Activated B cell treated with CpG ODN at 0.5 μM for 24 hours (primary cell): ENCODE measurements at regions of chr6 and their contacts with region 1.

Region 1: DNA sequence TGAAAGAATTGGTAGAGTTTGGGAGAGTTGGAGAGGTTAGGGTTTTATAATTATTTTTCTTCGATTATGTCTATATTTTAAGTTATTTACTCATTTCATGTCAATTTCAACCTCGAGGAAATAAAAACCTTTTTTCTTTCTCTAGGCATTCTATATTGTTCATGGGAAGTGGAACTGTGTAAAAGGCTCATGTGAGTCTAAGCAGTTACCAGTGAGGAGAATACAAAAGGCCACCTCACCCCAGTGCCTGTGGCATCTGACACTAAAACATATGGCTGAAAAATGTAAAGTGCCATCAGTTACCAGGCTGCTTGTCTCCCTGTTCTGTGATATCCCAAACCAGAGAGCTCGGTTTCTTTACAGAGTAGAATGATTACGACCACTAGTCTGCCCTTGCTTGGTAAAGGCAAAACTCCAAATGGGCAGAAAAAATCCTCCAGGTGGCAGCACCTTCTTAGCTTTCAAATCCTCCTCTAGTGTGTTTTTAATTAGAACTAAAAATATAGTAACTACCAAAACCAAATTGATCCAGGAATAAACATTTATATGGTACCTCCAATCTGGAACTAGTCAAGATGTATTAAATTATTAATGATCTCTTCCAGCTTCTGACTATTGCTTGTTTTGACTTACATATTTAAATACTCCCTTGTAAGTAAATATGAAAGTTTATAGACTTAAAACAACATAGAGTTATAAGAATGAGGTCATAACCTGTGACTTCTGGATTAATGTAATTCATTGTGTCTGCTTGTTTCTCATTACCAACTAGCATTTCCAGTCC is 122.6 kb upstream of the MCHR2 start:
- DNase-seq: no peak
- ATAC-seq: no peak
- H3K4me3 Mint-ChIP-seq: no peak overlapping the region
- H3K27ac Mint-ChIP-seq: no peak overlapping the region
- H3K4me1 Mint-ChIP-seq: no peaks in the 10 kb centered on the region
- H3K27me3 Mint-ChIP-seq: peaks cover 2% of the 10 kb centered on the region
- CTCF ChIP-seq: no peak

Region 2: GRCh38 chr6:100202417-100203194 is 86.0 kb after region 1 on chr6:
- CTCF ChIA-PET with region 1: no interaction called
- POLR2A ChIA-PET with region 1: no interaction called
- intact Hi-C with region 1: no loop called
- DNase-seq: no peak
- ATAC-seq: no peak
- H3K4me3 Mint-ChIP-seq: no peak overlapping the region
- H3K27ac Mint-ChIP-seq: no peak overlapping the region
- H3K4me1 Mint-ChIP-seq: no peaks in the 10 kb centered on the region
- H3K27me3 Mint-ChIP-seq: no peaks in the 10 kb centered on the region
- CTCF ChIP-seq: no peak

Region 3: DNA sequence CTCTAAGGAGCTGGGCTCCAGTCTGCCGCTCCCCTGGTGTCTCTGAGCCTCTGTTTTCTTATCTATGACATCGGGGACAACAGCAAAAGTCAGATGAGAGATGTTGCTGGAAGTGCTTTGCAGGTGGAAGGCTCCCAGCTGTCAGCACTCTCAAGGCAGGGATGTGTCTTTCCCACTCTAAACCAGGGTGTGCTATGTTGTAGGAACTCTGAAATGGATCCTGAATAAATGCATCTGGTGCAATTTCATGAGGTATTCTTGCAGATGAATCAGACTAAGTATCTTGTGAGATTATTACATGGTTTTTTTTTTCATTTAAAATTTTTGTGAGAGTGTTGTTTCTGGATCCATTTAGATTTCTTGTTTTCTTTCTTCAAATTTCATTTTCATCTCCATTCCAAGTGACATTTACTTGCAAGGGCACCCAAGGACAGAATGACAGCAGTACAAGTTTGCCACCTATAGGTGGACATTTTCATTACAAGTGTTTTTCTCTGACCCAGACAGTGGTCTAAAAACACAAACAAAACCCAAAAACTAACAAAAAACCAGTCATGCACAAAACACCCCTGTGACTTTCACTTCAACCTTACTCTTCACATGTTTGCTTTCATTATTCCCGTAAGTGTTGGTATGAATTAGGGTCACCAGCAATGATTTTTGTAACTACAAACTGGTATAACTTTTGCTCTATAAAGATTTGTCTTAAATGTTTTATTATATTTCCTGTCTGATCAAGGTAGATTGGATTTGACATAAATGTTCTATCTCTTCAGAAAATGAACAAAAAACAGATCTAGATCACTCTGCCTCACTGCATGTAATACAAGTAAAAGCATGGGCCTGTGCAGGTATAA is 362.8 kb after region 1 on chr6:
- CTCF ChIA-PET with region 1: no interaction called
- POLR2A ChIA-PET with region 1: no interaction called
- intact Hi-C with region 1: loop called (anchors 1 kb)
- DNase-seq: no peak
- ATAC-seq: no peak
- H3K4me3 Mint-ChIP-seq: no peak overlapping the region
- H3K27ac Mint-ChIP-seq: no peak overlapping the region
- H3K4me1 Mint-ChIP-seq: no peaks in the 10 kb centered on the region
- H3K27me3 Mint-ChIP-seq: peaks cover 8% of the 10 kb centered on the region
- CTCF ChIP-seq: no peak

Region 4: GRCh38 chr6:100573167-100573566 is 456.6 kb after region 1 on chr6:
- CTCF ChIA-PET with region 1: no interaction called
- POLR2A ChIA-PET with region 1: no interaction called
- intact Hi-C with region 1: loop called (anchors 2 kb)
- DNase-seq: no peak
- ATAC-seq: no peak
- H3K4me3 Mint-ChIP-seq: no peak overlapping the region
- H3K27ac Mint-ChIP-seq: no peak overlapping the region
- H3K4me1 Mint-ChIP-seq: no peaks in the 10 kb centered on the region
- H3K27me3 Mint-ChIP-seq: no peaks in the 10 kb centered on the region
- CTCF ChIP-seq: no peak

Region 5: GRCh38 chr6:100657678-100658330 is 541.2 kb after region 1 on chr6:
- CTCF ChIA-PET with region 1: no interaction called
- POLR2A ChIA-PET with region 1: no interaction called
- intact Hi-C with region 1: loop called (anchors 1 kb)
- DNase-seq: no peak
- ATAC-seq: no peak
- H3K4me3 Mint-ChIP-seq: no peak overlapping the region
- H3K27ac Mint-ChIP-seq: no peak overlapping the region
- H3K4me1 Mint-ChIP-seq: no peaks in the 10 kb centered on the region
- H3K27me3 Mint-ChIP-seq: no peaks in the 10 kb centered on the region
- CTCF ChIP-seq: no peak

Region 6: DNA sequence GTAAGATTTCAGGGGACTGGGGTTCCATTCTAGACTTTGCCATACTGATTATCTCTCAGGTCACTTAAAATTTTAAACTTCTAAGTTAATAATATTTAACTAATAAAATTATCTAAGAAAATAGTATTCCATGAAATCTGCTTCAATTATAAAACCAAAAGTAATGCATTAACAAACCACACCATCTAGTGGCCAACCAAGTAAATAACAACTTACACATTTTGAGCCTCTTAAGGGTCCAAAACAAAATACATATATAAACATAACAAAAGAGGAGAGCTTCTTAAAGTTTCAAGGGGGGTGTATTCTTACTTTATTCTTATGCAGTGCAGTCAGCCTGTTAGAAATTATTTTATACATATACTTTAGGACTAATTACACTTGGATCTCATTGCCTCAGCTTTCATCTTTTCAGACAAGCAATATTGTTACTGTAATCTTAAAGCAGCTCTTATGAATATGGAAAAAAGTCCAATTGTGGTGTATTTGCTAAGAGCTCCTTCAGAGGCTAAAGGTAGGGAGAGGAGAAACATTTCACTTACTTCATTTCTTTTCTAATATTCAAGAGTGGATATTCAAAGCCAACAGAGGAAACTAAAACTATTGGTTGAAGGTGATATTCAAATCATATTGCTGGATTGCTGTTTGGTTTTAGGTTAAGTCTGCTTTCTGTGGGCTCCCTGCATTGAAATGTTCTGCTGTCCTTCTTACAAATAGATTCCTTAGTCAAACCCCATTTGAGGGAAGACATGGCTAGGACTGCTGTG is 547.9 kb after region 1 on chr6:
- CTCF ChIA-PET with region 1: no interaction called
- POLR2A ChIA-PET with region 1: no interaction called
- intact Hi-C with region 1: loop called (anchors 2 kb)
- DNase-seq: no peak
- ATAC-seq: no peak
- H3K4me3 Mint-ChIP-seq: no peak overlapping the region
- H3K27ac Mint-ChIP-seq: no peak overlapping the region
- H3K4me1 Mint-ChIP-seq: peaks cover 5% of the 10 kb centered on the region
- H3K27me3 Mint-ChIP-seq: no peaks in the 10 kb centered on the region
- CTCF ChIP-seq: no peak

Region 7: DNA sequence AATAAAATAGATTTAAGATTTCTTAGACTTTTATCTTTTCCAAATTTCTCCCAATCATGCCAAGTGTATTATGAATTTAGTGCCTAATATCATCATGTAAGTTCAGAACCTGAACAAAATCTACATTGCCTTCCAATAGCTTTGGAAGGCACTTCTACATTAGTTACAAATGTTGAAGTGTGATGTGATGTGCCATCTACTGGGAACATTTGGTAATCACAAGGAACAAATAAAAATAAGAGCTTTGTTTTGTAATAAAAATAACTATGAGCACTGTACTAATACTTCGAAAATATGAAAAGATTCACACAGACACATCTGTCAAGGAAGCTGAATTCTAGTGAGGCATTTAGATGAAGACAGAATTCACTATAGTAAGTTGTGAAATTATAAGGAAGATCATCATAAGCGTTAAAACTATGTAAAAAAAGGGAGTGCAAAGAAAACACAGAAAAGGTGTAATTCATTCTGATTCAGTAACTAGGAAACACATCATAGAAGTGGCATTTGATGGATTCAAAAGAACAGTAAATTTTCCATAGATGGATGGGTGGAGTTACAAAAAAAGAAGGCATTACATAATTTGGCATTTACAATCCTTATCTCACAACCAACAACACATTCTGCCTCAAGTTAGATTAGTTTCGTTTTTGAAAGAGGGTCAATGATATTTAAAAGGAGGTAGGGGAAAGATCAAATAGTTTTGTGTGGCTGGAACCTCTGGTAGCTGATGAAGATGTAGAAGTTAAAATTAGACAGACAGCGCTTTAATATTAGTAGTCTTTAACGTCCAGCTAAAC is 603.5 kb after region 1 on chr6:
- CTCF ChIA-PET with region 1: interaction called, 4 read pairs
- POLR2A ChIA-PET with region 1: no interaction called
- intact Hi-C with region 1: loop called (anchors 5 kb)
- DNase-seq: no peak
- ATAC-seq: no peak
- H3K4me3 Mint-ChIP-seq: no peak overlapping the region
- H3K27ac Mint-ChIP-seq: no peak overlapping the region
- H3K4me1 Mint-ChIP-seq: peaks cover 8% of the 10 kb centered on the region
- H3K27me3 Mint-ChIP-seq: no peaks in the 10 kb centered on the region
- CTCF ChIP-seq: no peak